HCT116 (cell line): ENCODE measurements at regions of chr11 and their contacts with region 1.

Region 1: GRCh38 chr11:60756307-60757032 is at the start of gene MS4A15:
- DNase-seq: peak; percentile 29
- ATAC-seq: peak; percentile 94
- H3K4me3 ChIP-seq: no peak within 1 kb of the TSS
- H3K27ac ChIP-seq: no peak within 1 kb of the TSS
- H3K4me1 ChIP-seq: no peaks in the 10 kb centered on the region
- H3K27me3 ChIP-seq: peaks cover 16% of the 10 kb centered on the region; the same call in 1 of the 2 replicates
- CTCF ChIP-seq: peak; percentile 46 to 63 (median 50); a peak in 5 of 6 replicates
- POLR2A ChIP-seq: no peak
- RAD21 ChIP-seq: peak; percentile 38
- total RNA-seq, gene MS4A15: 1.5 TPM

Region 2: GRCh38 chr11:60657888-60658287 is 98.6 kb before region 1 on chr11:
- CTCF ChIA-PET with region 1: interaction called, 11 read pairs
- POLR2A ChIA-PET with region 1: no interaction called
- RAD21 ChIA-PET with region 1: no interaction called
- intact Hi-C with region 1: no loop called
- DNase-seq: no peak
- ATAC-seq: peak; percentile 64
- H3K4me3 ChIP-seq: no peak overlapping the region
- H3K27ac ChIP-seq: no peak overlapping the region
- H3K4me1 ChIP-seq: no peaks in the 10 kb centered on the region
- H3K27me3 ChIP-seq: no peaks in the 10 kb centered on the region
- CTCF ChIP-seq: peak in 1 of 3 experiments; percentile 15; a peak in 1 of 6 replicates
- POLR2A ChIP-seq: no peak
- RAD21 ChIP-seq: peak; percentile 37

Region 3: DNA sequence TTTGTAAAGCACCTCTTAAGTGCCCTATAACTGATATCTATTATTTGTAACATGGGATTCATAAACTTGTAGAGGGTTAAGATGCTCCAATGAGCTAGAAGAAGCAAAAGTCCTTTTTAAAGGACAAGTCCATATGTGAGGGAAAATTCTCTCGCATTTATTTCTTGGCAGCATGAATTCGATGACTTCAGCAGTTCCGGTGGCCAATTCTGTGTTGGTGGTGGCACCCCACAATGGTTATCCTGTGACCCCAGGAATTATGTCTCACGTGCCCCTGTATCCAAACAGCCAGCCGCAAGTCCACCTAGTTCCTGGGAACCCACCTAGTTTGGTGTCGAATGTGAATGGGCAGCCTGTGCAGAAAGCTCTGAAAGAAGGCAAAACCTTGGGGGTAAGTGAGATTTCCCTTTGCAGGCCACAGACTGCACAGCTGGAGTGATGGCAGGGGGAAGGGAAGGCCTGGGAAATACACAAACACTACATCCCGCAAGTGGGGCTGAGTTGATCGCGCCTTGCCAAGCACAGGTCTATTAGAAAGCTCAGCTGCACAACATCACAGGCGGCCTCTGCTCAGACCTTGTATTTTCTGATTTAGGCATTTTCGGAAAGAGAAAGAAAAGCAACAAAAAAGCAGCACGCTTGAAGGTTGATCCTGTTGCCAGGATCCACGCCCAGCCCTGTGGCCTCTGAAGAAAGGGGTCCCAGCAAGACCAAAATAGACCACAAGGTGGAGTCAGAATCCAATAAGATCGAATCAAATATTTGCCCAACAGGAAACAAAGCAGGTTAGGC is 55.6 kb before region 1 on chr11:
- CTCF ChIA-PET with region 1: interaction called, 4 read pairs
- POLR2A ChIA-PET with region 1: no interaction called
- RAD21 ChIA-PET with region 1: no interaction called
- intact Hi-C with region 1: loop called (anchors 1 kb)
- DNase-seq: peak; percentile 35
- ATAC-seq: peak; percentile 92
- H3K4me3 ChIP-seq: no peak overlapping the region
- H3K27ac ChIP-seq: no peak overlapping the region
- H3K4me1 ChIP-seq: peaks cover 0 to 3% of the 10 kb centered on the region in 2 experiments; a peak in 2 of 4 replicates
- H3K27me3 ChIP-seq: no peaks in the 10 kb centered on the region
- CTCF ChIP-seq: peak; percentile 59 to 72 (median 69); a peak in 5 of 6 replicates
- POLR2A ChIP-seq: no peak
- RAD21 ChIP-seq: peak; percentile 66